ENCODE measurements at regions of chr2 and their contacts with region 1.

Region 1: DNA sequence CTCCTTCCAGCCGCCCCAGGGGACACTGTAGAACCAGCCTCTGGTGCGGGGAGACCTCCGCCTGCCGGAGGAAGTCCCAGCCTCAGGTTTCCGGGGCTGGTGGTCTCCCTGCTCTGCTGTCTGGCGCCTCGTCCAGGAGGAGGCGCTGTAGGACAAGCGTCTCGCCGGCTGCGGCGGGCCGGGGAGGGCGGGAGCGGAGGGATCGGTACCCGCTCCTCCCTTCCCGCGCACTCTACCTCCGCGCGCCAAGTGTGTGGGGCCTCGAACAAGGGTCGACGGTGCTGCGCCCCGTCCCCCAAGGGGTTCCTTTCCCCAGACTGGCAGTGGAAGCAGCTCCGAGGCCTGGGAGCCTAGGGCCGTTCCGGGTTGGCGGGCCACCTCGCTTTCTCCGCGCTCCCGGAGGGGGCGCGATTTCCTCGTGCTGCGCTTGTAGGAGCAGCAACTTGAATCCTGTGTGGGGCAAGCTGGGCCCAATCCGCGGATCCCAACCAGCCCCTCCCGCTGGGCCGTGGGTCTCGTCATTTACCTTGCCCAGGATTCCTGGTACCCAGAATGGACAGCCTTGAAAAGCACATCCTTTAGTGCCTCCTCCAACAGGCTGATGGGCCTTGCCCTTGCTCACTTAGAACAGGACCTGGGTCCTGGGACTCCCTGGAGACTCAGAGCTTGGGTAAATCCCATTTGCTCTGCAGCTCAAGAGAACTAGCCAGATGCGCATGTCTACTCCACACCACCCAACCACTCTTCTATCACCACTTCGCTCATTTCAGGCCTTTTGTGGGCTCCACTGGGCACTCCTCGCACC is 10.6 kb upstream of the HOXD4 start:
- DNase-seq: peak; percentile 49
- H3K4me3 Mint-ChIP-seq: peak overlapping the region; percentile 3
- H3K27ac Mint-ChIP-seq: no peak overlapping the region
- H3K4me1 Mint-ChIP-seq: peaks cover 11% of the 10 kb centered on the region
- H3K27me3 Mint-ChIP-seq: peaks cover 68% of the 10 kb centered on the region

Region 2: GRCh38 chr2:176187899-176188773 is 47.4 kb after region 1 on chr2 and contains the start of gene HOXD1:
- intact Hi-C with region 1: loop called (anchors 5 kb)
- DNase-seq: no peak
- H3K4me3 Mint-ChIP-seq: peak within 1 kb of the TSS; percentile 86
- H3K27ac Mint-ChIP-seq: peak within 1 kb of the TSS; percentile 57
- H3K4me1 Mint-ChIP-seq: peaks cover 13% of the 10 kb centered on the region
- H3K27me3 Mint-ChIP-seq: peaks cover 76% of the 10 kb centered on the region
- total RNA-seq, gene HOXD1: not detected in 2 replicates

Region 3: DNA sequence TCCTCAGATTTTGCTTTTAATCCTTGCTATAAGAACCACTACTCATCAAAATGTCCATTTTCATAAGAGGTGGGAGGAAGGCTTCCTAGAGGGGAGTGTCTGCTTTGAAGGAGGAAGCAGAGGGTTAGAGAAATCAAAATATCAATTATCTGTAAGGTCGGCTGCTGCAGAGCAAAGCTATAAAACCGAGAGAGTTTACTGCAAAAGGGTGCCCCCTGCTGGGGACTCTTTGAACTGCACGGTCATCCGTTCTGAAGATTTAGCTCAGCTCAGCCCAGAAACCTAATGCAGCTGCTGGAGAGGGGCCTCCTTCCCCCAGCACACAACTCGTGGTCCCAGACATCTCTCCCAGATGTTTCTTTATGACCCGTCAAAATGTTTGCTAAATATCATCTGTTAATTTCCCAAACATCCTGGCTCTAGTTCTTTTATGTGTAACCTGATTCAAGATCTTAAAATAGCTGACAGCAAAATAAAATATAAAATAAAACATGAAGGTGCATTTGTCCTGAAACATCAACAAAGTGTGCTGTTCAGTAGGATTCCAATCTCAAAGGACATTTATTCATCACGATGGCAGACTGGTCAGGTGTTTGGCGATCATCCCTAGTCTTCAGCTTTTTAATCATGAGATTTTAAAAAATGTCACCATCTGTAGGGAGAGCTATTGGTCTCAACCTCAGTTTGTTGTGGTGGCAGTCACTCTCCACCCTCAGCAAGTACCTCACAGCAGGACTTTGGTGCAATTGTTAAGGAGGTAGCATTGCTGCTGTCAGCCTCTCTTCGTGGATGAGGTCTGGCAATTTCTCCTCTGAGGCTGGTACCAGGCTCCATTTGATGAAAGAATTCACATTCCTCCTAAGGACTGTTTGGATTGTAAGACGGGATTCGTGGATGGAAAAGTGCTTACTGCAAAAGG is 314.4 kb after region 1 on chr2:
- intact Hi-C with region 1: loop called (anchors 1 kb)
- DNase-seq: peak; percentile 59
- H3K4me3 Mint-ChIP-seq: no peak overlapping the region
- H3K27ac Mint-ChIP-seq: no peak overlapping the region
- H3K4me1 Mint-ChIP-seq: no peaks in the 10 kb centered on the region
- H3K27me3 Mint-ChIP-seq: peaks cover 13% of the 10 kb centered on the region

Region 4: DNA sequence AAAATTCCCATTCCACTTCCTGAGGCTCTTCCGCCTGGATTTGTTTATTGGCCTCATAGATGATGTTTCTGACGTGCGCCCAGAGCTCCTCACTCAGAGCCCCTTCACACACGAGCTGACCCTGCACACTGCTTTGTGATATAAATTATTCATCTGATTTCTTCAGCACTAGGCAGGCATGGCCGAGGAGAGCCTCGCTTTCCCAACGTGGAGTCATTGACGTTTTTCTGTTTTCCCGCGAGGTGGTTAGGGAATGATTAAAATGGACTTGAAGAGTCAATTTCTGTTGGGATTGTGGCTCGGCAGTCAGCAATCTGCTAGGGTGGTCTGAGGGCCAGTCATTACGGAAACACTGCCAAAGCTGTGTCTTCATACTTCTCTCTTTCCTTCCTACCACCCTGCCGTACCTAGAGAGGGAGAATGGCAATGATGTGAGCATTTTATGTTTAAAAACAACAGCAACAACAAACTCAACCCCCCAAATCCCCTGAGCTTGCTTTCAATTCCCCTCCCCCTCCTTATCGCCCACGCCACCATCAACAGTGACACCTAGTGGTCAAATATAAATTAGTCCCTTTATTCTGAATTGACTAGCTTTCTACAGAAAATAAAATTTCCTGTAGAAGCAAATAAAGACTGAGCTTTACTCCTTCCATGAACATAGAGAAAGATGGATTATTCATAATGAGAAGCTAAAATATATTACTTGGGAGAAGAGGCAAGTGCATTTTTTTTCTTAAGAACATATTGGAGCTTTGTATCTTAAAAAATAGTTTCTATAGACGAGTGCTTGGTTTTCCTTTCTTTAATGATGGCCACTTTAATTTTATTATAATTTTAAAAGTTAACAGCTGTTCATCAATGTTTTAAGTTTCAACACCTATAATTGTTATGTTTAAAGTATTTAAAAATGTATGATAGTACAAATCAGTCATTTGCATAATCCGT is 413.7 kb after region 1 on chr2:
- intact Hi-C with region 1: loop called (anchors 1 kb)
- DNase-seq: no peak
- H3K4me3 Mint-ChIP-seq: peak overlapping the region; percentile 72
- H3K27ac Mint-ChIP-seq: no peak overlapping the region
- H3K4me1 Mint-ChIP-seq: peaks cover 14% of the 10 kb centered on the region
- H3K27me3 Mint-ChIP-seq: peaks cover 30% of the 10 kb centered on the region

Region 5: DNA sequence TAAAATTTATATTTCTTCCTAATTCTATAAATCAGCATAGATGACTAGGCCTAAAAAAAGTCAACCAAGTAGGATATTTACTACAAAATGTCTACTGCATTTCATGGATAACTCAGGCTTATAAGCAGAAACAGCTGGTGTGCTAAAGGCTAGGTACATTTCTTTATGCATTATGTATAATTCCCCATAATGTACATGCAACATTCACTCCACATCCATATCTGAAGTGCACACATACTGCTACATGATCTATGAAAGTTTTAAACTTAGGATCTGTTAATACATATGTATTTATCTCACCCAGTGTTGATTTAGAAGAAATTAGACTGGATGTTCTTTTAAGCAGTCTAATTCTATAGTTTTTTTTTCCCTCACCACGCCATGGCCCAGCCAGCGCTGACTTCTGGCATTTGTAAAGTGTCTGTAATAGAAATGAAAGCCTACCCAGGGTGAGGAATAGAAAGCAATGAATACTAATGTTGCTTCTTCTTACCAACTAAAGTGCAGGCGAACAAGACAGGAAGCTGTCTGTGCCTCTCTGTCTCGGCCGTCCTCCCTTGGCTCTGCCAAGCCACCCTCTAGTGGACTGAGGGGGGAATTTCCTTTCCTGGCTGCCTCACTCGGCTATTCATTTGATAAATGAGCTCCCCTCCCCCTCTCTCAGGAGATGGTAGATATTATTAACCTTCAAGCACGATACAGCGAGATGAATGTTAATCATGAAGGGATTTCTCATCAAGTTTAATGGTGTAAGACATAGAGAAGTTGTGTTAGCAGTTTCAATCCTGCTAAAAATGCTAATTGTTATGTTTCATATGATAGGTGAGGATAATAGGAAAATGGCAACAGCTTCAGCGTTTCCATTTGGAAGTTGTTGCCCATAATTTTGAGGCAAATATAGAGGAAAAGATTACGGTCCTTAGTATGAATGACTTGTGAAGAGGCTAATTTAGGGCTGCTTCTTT is 513.0 kb after region 1 on chr2:
- intact Hi-C with region 1: loop called (anchors 1 kb)
- DNase-seq: no peak
- H3K4me3 Mint-ChIP-seq: no peak overlapping the region
- H3K27ac Mint-ChIP-seq: no peak overlapping the region
- H3K4me1 Mint-ChIP-seq: peaks cover 18% of the 10 kb centered on the region
- H3K27me3 Mint-ChIP-seq: peaks cover 45% of the 10 kb centered on the region

Measured in activated T-helper 1 cell treated with anti-CD3 and anti-CD28 coated beads, Interleukin-12 subunit alpha, Interleukin-12 subunit beta, Interleukin-2, Interleukin-4 antibody, amounts not matched to agents 30 ng/mL and 10 ng/mL and 1 ng/mL, durations not matched to agents 14 hours and 24 hours and 36 hours (primary cell).